Heart right ventricle (tissue), 16 donors: ENCODE measurements at regions of chr1 and their contacts with region 1.

Region 1: DNA sequence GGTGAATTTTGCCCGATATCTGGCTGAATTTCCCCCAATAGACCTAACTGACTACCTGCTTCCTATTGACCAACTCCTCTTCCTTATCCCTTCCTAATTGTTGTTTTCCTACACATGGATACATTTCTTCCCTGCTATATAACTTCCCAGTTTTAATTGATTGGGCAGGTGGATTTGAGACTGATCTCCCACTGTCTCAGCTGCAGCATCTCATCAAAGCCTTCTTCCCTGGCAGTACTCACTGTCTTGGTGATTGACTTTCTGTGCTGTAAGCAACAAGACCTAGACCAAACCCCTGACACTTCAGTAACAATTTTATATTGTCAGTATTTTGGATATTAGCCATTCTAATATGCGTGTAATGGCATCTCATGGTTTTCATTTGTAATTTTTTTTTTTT is 11.3 kb upstream of the PLA2G2A start:
- DNase-seq: no peak
- ATAC-seq: no peak
- H3K4me3 ChIP-seq: no peak overlapping the region
- H3K27ac ChIP-seq: no peak overlapping the region
- H3K4me1 ChIP-seq: no peaks in the 10 kb centered on the region
- H3K27me3 ChIP-seq: peaks cover 0 to 41% (median 20%) of the 10 kb centered on the region in 7 donors
- CTCF ChIP-seq: no peak

Region 2: DNA sequence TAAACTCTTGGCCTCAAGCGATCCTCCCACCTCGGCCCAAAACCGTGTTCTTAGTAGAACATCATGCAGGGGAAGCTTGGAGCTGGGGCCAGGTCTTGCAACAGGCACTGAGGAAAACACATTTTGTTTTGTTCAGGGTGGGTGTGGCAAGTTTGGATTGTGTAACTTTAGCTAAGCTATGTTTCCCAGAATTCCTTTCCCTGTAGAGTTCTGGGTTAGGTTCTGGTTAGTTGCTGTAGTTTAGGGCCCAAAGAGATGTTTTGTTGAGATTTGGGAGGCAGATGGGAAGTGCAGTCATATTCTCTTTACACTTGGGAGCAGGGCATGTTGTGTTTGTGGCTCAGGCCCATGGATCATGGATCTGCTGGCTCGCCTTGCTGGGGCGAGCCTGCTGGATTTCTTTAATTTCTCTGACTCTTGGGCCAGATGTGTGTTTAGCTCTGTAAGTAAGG is 103.3 kb after region 1 on chr1:
- intact Hi-C with region 1: loop called in 1 of 10 experiments (anchors 10 kb)
- DNase-seq: peak; percentile 44 to 60
- ATAC-seq: peak; percentile 70 to 91 (median 82)
- H3K4me3 ChIP-seq: no peak overlapping the region
- H3K27ac ChIP-seq: peak overlapping the region in 9 of 10 donors; percentile 32 to 70 (median 57)
- H3K4me1 ChIP-seq: peaks cover 0 to 6% (median 0%) of the 10 kb centered on the region in 9 donors
- H3K27me3 ChIP-seq: no peaks in the 10 kb centered on the region
- CTCF ChIP-seq: no peak